ENCODE measurements at regions of chr6 and their contacts with region 1.

Region 1: DNA sequence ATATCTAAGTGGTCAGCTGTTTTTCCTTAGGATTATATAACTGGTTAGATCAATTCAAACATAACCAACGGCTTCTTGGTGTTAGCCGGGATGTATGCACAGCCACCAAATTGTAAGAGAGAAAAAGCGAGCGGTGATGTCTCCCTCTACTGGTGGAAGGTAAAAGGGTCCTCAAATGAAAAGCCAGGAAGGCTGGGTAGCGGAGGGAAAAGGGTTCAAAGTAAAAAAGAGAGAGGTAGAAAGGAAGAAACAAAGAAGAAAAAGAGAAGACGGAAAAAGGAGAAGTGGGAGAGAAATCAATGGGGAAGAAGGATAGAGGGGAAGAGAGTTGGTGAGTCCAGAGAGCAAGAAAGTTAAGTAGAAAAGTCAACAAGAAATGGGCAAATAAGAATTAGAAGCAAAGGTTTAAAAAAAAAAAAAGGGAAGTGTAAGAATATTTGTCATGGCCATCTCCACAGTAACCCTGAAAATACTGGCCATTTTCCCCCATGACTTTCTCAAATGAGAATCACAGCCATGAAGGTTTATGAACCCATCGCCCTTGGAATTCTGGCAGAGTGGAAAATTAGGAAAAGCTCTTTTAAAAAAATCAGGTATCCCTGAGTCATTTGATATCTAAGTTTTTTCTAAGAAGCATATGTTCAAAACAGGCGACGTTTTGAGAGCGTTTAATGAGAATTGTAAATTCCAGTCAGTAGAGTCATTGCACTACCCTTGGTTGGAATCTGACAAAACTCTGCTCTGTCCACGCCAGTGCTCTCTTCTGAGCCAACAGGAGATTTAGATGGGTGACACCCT is 155.6 kb upstream of the SNX9 start:
- DNase-seq: peak; percentile 22 to 77 (median 40)
- ATAC-seq: peak; percentile 65
- H3K4me3 ChIP-seq: no peak overlapping the region
- H3K4me3 Mint-ChIP-seq: no peak overlapping the region
- H3K27ac ChIP-seq: no peak overlapping the region
- H3K27ac Mint-ChIP-seq: no peak overlapping the region
- H3K4me1 ChIP-seq: peaks cover 12% of the 10 kb centered on the region
- H3K4me1 Mint-ChIP-seq: peaks cover 28% of the 10 kb centered on the region
- H3K27me3 ChIP-seq: no peaks in the 10 kb centered on the region
- H3K27me3 Mint-ChIP-seq: no peaks in the 10 kb centered on the region
- CTCF ChIP-seq: peak; percentile 99

Region 2: GRCh38 chr6:157339432-157339831 is 328.0 kb before region 1 on chr6:
- CTCF ChIA-PET with region 1: no interaction called
- POLR2A ChIA-PET with region 1: no interaction called
- intact Hi-C with region 1: loop called in 1 of 2 experiments (anchors 5 kb)
- DNase-seq: no peak
- ATAC-seq: no peak
- H3K4me3 ChIP-seq: no peak overlapping the region
- H3K4me3 Mint-ChIP-seq: no peak overlapping the region
- H3K27ac ChIP-seq: no peak overlapping the region
- H3K27ac Mint-ChIP-seq: no peak overlapping the region
- H3K4me1 ChIP-seq: no peaks in the 10 kb centered on the region
- H3K4me1 Mint-ChIP-seq: no peaks in the 10 kb centered on the region
- H3K27me3 ChIP-seq: peaks cover 3 to 14% of the 10 kb centered on the region in 2 experiments
- H3K27me3 Mint-ChIP-seq: peaks cover 71% of the 10 kb centered on the region
- CTCF ChIP-seq: no peak

Region 3: DNA sequence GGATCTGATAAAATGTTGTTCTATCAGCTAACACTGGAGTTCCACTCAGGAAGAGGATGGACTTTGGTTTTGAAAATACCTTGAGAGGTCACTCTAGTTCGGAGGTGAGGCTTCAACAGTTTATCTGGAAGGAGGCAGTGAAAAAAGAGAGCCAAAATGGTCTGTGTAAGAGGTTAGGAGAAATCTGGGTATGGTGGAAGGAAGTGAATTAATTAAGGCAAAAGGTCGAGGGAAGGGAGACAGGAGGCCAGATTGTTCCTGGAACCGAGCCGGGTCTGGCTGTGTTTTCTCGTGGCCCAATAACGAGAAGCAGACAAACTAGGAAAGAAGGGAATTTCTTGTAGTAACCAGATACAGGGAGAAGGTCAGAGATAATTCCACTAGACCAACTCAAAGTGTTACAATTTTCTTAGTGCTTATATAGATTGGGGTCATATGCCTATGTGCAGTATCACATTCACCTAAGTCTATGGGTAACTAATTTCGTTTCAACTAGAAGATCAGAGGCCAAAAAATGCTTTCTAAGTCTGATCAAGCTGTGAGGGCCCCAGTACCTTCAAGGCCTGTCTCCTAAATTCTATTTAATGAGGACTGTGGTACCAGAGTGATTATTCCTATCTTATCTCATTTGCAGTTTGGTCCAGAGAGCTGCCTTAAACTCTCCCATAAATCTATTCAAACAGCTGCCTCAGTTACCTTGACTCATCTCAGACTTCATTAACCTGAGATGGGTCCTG is 59.6 kb after region 1 on chr6:
- CTCF ChIA-PET with region 1: no interaction called
- POLR2A ChIA-PET with region 1: no interaction called
- intact Hi-C with region 1: no loop called
- DNase-seq: no peak
- ATAC-seq: no peak
- H3K4me3 ChIP-seq: no peak overlapping the region
- H3K4me3 Mint-ChIP-seq: no peak overlapping the region
- H3K27ac ChIP-seq: no peak overlapping the region
- H3K27ac Mint-ChIP-seq: no peak overlapping the region
- H3K4me1 ChIP-seq: no peaks in the 10 kb centered on the region
- H3K4me1 Mint-ChIP-seq: no peaks in the 10 kb centered on the region
- H3K27me3 ChIP-seq: no peaks in the 10 kb centered on the region
- H3K27me3 Mint-ChIP-seq: no peaks in the 10 kb centered on the region
- CTCF ChIP-seq: no peak

Region 4: GRCh38 chr6:157873735-157874344 is 206.4 kb after region 1 on chr6:
- CTCF ChIA-PET with region 1: no interaction called
- POLR2A ChIA-PET with region 1: no interaction called
- intact Hi-C with region 1: loop called (anchors 1 to 5 kb)
- DNase-seq: peak; percentile 75 to 92 (median 84)
- ATAC-seq: peak; percentile 74
- H3K4me3 ChIP-seq: no peak overlapping the region
- H3K4me3 Mint-ChIP-seq: no peak overlapping the region
- H3K27ac ChIP-seq: no peak overlapping the region
- H3K27ac Mint-ChIP-seq: peak overlapping the region; percentile 47
- H3K4me1 ChIP-seq: peaks cover 15% of the 10 kb centered on the region
- H3K4me1 Mint-ChIP-seq: peaks cover 39% of the 10 kb centered on the region
- H3K27me3 ChIP-seq: no peaks in the 10 kb centered on the region
- H3K27me3 Mint-ChIP-seq: no peaks in the 10 kb centered on the region
- CTCF ChIP-seq: peak; percentile 92

Measured in CD4-positive, alpha-beta T cell (primary cell).